GM12878 (cell line): ENCODE measurements at regions of chr10 and their contacts with region 1.

Region 1: DNA sequence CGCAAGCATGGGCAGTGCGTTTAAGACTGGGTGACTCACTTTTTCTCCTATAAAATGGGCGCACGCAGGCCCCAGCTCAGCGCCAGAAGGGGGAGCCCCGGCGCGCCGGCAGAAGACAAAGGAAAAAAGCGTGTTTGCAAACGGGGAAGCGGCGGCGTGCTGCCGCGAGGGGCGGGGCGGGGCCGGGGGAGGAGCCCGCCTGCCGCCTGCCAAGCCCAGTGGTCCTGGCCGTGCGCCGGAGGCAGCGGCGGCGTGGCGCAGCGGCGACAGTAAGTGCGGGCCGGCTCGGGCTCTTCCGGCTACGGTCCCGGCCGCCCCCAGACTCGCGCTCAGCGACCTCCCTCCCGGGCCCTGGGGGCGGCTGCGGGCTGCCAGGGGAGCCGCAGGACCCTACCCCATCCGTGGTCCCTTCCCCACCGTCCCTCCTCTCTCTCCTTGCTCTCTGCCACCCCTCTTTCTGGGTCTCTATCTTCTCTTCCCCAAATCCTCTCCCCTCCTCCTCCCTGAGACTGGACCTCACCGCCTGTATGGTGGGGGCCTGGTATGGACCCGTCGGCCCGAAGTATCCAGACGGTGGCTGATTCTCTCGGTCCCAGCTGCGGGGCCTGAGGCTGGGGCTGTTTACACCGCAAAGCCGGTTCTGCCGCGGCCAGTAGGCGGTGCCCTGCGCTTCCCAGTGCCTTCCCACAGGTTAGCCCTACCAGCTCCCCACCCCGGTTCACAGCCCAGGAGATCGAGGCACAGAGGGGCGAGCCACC is at the start of gene SLC29A3:
- DNase-seq: no peak
- ATAC-seq: peak; percentile 96
- H3K4me3 ChIP-seq: peak within 1 kb of the TSS; percentile 82
- H3K27ac ChIP-seq: peak within 1 kb of the TSS; percentile 6; the same call in 1 of the 2 replicates
- H3K4me1 ChIP-seq: peaks cover 8% of the 10 kb centered on the region
- H3K27me3 ChIP-seq: no peaks in the 10 kb centered on the region
- CTCF ChIP-seq: peak; percentile 71 to 77 (median 73)
- EP300 ChIP-seq: no peak
- POLR2A ChIP-seq: peak; percentile 82
- RAD21 ChIP-seq: peak; percentile 66
- polyA plus RNA-seq, gene SLC29A3: 2.1 to 2.5 TPM

Region 2: GRCh38 chr10:71291528-71291900 is 27.7 kb before region 1 on chr10:
- CTCF ChIA-PET with region 1: no interaction called
- POLR2A ChIA-PET with region 1: no interaction called
- RAD21 ChIA-PET with region 1: no interaction called
- SMC1A ChIA-PET with region 1: no interaction called
- in situ Hi-C with region 1: no loop called
- intact Hi-C with region 1: no loop called
- DNase-seq: no peak
- ATAC-seq: no peak
- H3K4me3 ChIP-seq: no peak overlapping the region
- H3K27ac ChIP-seq: no peak overlapping the region
- H3K4me1 ChIP-seq: no peaks in the 10 kb centered on the region
- H3K27me3 ChIP-seq: peaks cover 0 to 2% of the 10 kb centered on the region in 2 experiments; a peak in 3 of 4 replicates
- CTCF ChIP-seq: no peak
- EP300 ChIP-seq: no peak
- POLR2A ChIP-seq: no peak
- RAD21 ChIP-seq: no peak

Region 3: DNA sequence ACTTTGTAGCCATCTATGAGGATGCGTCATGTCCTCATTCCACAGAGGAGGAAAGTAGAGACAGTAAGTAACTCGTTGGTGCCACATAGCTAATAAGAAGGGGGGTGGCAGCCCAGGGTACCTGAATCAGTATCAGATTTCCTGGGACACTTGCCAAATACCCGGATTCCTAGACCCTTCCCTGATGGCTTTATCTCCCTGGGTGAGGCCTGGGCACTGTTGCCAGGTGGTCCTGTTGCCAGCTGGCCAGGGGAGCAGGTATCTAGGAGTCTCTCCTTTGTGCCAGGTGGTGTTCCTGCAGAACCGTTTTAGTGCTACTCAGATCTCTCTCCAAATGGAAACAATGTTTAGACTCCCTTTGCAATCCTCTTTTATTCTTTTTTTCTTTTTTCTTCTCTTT is 12.5 kb after region 1 on chr10:
- CTCF ChIA-PET with region 1: interaction called, 10 read pairs
- POLR2A ChIA-PET with region 1: interaction called, 6 read pairs
- RAD21 ChIA-PET with region 1: no interaction called
- SMC1A ChIA-PET with region 1: interaction called, 8 read pairs
- in situ Hi-C with region 1: no loop called
- intact Hi-C with region 1: no loop called
- DNase-seq: no peak
- ATAC-seq: no peak
- H3K4me3 ChIP-seq: no peak overlapping the region
- H3K27ac ChIP-seq: no peak overlapping the region
- H3K4me1 ChIP-seq: peaks cover 7% of the 10 kb centered on the region
- H3K27me3 ChIP-seq: no peaks in the 10 kb centered on the region
- CTCF ChIP-seq: no peak
- EP300 ChIP-seq: no peak
- POLR2A ChIP-seq: no peak
- RAD21 ChIP-seq: no peak

Region 4: DNA sequence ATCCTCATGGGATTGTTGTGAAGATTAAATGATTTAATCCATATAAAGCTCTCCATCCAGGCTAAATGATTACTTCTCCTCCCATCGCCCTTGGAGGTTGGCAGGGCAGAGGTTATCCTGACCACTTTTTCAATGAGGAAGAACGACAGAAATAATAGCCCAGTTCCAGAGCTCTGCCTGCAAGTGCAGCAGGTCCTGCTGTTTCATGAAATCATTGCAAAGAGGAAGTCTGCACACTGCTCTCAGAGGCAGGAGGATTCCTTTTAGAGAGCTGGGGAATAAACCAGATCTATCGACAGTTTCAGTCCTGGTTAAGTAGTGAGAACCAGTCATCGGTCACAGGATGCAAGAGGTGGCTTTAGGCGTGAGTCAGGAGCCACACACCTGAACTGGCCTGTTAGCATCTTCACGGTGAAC is 52.5 kb after region 1 on chr10:
- CTCF ChIA-PET with region 1: interaction called, 359 read pairs
- POLR2A ChIA-PET with region 1: interaction called, 26 read pairs
- RAD21 ChIA-PET with region 1: interaction called, 77 read pairs
- SMC1A ChIA-PET with region 1: interaction called, 249 read pairs
- in situ Hi-C with region 1: no loop called
- intact Hi-C with region 1: no loop called
- DNase-seq: peak; percentile 56
- ATAC-seq: peak; percentile 65
- H3K4me3 ChIP-seq: no peak overlapping the region
- H3K27ac ChIP-seq: peak overlapping the region; percentile 93
- H3K4me1 ChIP-seq: peaks cover 58% of the 10 kb centered on the region
- H3K27me3 ChIP-seq: no peaks in the 10 kb centered on the region
- CTCF ChIP-seq: no peak
- EP300 ChIP-seq: no peak; a peak in 1 of 4 replicates
- POLR2A ChIP-seq: no peak
- RAD21 ChIP-seq: no peak

Region 5: GRCh38 chr10:71383972-71384687 is 64.9 kb after region 1 on chr10:
- CTCF ChIA-PET with region 1: interaction called, 359 read pairs
- POLR2A ChIA-PET with region 1: interaction called, 26 read pairs
- RAD21 ChIA-PET with region 1: interaction called, 77 read pairs
- SMC1A ChIA-PET with region 1: interaction called, 249 read pairs
- in situ Hi-C with region 1: no loop called
- intact Hi-C with region 1: no loop called
- DNase-seq: no peak
- ATAC-seq: peak; percentile 98
- H3K4me3 ChIP-seq: no peak overlapping the region
- H3K27ac ChIP-seq: no peak overlapping the region
- H3K4me1 ChIP-seq: no peaks in the 10 kb centered on the region
- H3K27me3 ChIP-seq: peaks cover 0 to 3% of the 10 kb centered on the region in 2 experiments; a peak in 1 of 4 replicates
- CTCF ChIP-seq: peak; percentile 95 to 97 (median 95)
- EP300 ChIP-seq: no peak
- POLR2A ChIP-seq: no peak
- RAD21 ChIP-seq: peak; percentile 86

Region 6: DNA sequence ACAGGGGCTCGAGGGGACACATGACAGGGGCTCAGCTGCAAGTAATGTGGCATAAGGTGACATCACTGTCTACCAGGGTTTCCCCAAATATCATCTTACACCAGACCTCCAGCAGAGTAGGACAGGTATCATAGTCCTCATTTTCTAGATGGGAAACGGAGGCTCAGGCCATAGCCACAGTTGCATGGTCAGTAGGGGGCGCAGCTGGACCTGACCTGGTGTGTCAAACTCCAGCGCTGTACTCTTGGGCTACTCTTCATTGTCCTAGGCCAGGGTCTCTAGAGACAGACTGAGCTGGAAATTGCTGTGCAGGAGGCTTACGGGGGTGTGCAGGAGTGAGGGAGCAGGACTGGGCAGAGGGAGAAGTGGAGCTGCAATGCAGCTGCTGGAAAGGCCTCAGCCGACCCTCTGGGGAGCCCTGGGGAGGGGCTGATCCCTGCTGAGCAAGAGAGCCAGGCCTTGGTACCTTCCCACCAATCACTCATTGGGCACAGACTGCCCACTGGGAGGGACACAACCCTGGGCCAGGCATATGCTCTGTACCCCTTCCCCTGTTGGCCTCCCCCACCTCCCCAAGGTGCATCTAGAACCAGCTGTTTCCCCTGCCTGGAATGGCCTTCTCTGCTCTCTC is 167.4 kb after region 1 on chr10:
- CTCF ChIA-PET with region 1: interaction called, 8 read pairs
- POLR2A ChIA-PET with region 1: no interaction called
- RAD21 ChIA-PET with region 1: interaction called, 3 read pairs
- SMC1A ChIA-PET with region 1: no interaction called
- in situ Hi-C with region 1: no loop called
- intact Hi-C with region 1: loop called (anchors 10 kb)
- DNase-seq: no peak
- ATAC-seq: peak; percentile 89
- H3K4me3 ChIP-seq: no peak overlapping the region
- H3K27ac ChIP-seq: no peak overlapping the region
- H3K4me1 ChIP-seq: no peaks in the 10 kb centered on the region
- H3K27me3 ChIP-seq: peaks cover 0 to 2% of the 10 kb centered on the region in 2 experiments; a peak in 1 of 4 replicates
- CTCF ChIP-seq: peak; percentile 65 to 71 (median 71)
- EP300 ChIP-seq: no peak
- POLR2A ChIP-seq: no peak
- RAD21 ChIP-seq: peak; percentile 65

Region 7: GRCh38 chr10:71608819-71609768 is 289.9 kb after region 1 on chr10:
- CTCF ChIA-PET with region 1: interaction called, 64 read pairs
- POLR2A ChIA-PET with region 1: no interaction called
- RAD21 ChIA-PET with region 1: interaction called, 5 read pairs
- SMC1A ChIA-PET with region 1: interaction called, 5 read pairs
- in situ Hi-C with region 1: no loop called
- intact Hi-C with region 1: loop called (anchors 2 kb)
- DNase-seq: no peak
- ATAC-seq: peak; percentile 82
- H3K4me3 ChIP-seq: no peak overlapping the region
- H3K27ac ChIP-seq: no peak overlapping the region
- H3K4me1 ChIP-seq: no peaks in the 10 kb centered on the region
- H3K27me3 ChIP-seq: no peaks in the 10 kb centered on the region; a peak in 2 of 4 replicates
- CTCF ChIP-seq: peak; percentile 75 to 84 (median 80)
- EP300 ChIP-seq: no peak
- POLR2A ChIP-seq: no peak
- RAD21 ChIP-seq: peak; percentile 64

Region 8: DNA sequence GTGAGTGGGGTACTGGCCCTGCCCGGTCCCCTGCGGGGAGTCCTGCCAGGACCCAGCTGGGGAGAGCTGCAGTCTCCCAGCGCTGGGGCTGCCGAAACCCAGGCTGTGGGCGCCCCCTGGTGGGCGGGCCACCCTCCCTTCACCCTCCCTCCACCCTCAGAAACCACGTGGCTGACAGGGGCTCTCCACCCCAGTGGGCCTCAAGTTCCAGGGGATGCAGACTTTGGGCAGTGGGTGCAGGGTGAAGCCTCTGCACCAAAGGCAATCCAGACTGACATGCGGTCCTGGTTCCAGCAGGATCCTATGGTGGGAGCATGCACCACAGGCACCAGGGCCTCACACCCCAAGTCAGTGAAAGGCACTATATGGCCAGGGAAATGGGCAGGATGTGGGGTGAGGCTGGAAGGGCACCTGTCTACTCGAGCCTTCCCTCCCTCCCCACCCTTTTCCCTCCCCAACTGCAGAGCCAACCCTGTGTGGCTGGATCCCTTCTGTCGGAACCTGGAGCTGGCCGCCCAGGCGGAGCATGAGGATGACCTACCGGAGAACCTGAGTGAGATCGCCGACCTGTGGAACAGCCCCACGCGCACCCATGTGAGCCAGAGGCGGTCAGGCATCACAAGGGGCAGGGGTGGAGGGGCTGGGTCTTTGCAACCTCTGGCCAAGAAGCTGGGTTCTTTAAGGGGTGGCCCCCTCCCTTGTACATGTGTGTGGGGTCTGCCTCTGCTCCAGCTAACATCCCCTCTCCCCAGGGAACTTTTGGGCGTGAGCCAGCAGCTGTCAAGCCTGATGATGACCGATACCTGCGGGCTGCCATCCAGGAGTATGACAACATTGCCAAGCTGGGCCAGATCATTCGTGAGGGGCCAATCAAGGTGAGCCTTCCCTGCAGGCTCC is 493.0 kb after region 1 on chr10:
- CTCF ChIA-PET with region 1: interaction called, 3 read pairs
- POLR2A ChIA-PET with region 1: no interaction called
- RAD21 ChIA-PET with region 1: interaction called, 4 read pairs
- SMC1A ChIA-PET with region 1: interaction called, 4 read pairs
- in situ Hi-C with region 1: loop called (anchors 5 kb)
- intact Hi-C with region 1: loop called (anchors 2 kb)
- DNase-seq: no peak
- ATAC-seq: peak; percentile 99
- H3K4me3 ChIP-seq: no peak overlapping the region
- H3K27ac ChIP-seq: no peak overlapping the region
- H3K4me1 ChIP-seq: peaks cover 3% of the 10 kb centered on the region; the same call in 1 of the 2 replicates
- H3K27me3 ChIP-seq: no peaks in the 10 kb centered on the region
- CTCF ChIP-seq: peak; percentile 81 to 89 (median 82)
- EP300 ChIP-seq: no peak
- POLR2A ChIP-seq: peak; percentile 32; the same call in 1 of the 2 replicates
- RAD21 ChIP-seq: peak; percentile 84